ENCODE measurements at regions of chr2 and their contacts with region 1.

Region 1: GRCh38 chr2:135023886-135024485 is 23.3 kb downstream of the MAP3K19 start:
- DNase-seq: no peak
- H3K4me3 ChIP-seq: no peak overlapping the region
- H3K27ac ChIP-seq: no peak overlapping the region
- H3K4me1 ChIP-seq: no peaks in the 10 kb centered on the region
- CTCF ChIP-seq: no peak

Region 2: DNA sequence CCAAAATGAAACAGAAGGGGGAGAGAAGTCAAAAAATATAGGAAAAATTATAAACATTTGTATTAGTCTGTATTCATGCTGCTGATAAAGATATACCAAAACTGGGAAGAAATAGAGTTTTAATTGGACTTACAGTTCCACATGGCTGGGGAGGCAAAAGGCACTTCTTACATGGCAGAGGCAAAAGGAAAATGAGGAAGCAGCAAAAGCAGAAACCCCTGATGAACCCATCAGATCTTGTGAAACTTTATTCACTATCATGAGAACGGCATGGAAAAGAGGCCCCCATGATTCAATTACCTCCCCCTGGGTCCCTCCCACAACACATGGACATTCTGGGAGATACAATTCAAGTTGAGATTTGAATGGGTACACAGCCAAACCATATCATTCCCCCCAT is 428.0 kb after region 1 on chr2:
- CTCF ChIA-PET with region 1: no interaction called
- POLR2A ChIA-PET with region 1: no interaction called
- intact Hi-C with region 1: loop called (anchors 5 kb)
- DNase-seq: no peak
- H3K4me3 ChIP-seq: no peak overlapping the region
- H3K27ac ChIP-seq: no peak overlapping the region
- H3K4me1 ChIP-seq: no peaks in the 10 kb centered on the region
- CTCF ChIP-seq: no peak